HEK293T (cell line): ENCODE measurements at regions of chr20 and their contacts with region 1.

Region 1: DNA sequence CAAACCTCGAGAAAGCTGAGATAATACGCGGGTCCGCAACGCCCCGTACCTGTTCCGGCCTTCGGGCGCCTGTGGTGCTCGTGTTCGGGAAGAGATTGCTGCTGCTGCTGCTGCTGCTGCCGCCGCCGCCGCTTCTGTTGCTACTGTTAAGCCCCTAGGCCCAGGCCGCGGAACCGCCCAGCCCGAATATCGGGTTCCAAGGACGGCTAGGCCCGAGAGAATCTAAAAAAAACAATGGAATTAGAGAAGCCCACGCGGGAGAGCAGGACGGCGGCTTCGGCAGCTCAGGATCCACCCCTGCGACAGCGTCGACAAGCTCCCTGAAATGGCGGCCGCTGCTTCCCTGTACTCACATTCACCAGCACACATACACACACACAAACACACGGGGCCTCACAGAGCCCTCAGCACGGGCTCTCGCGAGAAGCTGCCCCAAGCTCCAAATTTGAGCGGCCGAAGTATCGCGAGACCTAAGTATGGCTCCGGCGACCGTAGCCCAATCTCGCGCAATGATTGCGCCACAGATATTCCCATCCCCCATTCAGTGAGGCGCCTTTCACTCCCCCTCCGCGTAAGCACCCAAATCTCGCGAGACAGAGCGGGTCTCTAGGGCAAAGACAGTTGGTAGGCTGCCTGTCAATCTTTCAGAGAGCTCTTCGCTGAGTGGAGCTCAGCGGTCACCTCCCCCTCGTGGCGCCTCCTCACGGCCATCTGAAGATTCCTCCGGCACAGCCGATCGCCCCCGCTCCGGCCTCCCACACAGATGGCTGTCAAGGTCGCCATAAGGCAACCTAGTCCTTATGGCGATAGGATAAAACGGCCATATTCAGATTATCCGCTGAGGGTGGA is at the start of gene RBM39:
- DNase-seq: peak; percentile 96

Region 2: DNA sequence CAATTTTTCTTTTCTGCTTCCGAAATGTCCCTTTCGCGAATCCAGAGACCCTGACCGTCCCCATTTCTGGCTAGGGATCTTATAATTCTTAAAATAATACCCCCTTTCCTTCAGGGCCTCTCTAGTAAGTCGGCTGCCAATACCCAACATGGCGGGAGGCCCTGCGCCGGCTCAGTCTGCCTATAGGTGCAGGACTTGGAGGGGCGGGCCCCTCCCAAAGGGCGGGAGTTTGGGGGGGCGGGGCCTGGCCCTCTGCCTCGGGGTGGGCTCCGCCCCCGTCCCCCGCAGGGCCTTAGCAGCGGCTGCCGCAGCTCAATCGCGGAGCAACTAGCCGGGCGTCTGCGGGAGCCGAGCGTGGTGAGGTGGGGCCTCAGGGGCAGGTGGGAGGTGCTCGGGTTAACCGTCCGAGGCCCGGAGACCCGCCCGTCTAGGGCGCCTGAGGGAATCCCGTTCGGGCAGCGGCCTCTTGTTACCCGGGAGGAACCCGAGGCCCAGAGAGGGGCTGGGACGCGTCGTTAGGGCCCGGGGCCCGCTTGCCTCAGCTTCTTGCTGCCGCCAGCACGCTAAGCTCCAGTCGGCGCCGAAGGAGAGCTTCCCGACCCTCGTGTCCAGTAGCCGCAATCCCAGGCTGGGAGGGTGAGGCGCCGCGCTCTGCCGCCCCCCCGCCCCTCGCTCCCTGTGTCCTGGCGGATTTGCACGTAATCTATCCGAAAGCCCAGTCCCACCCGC is 287.1 kb before region 1 on chr20 and contains the start of gene CEP250:
- CTCF ChIA-PET with region 1: no interaction called
- POLR2A ChIA-PET with region 1: interaction called, 11 read pairs
- DNase-seq: peak; percentile 96

Region 3: DNA sequence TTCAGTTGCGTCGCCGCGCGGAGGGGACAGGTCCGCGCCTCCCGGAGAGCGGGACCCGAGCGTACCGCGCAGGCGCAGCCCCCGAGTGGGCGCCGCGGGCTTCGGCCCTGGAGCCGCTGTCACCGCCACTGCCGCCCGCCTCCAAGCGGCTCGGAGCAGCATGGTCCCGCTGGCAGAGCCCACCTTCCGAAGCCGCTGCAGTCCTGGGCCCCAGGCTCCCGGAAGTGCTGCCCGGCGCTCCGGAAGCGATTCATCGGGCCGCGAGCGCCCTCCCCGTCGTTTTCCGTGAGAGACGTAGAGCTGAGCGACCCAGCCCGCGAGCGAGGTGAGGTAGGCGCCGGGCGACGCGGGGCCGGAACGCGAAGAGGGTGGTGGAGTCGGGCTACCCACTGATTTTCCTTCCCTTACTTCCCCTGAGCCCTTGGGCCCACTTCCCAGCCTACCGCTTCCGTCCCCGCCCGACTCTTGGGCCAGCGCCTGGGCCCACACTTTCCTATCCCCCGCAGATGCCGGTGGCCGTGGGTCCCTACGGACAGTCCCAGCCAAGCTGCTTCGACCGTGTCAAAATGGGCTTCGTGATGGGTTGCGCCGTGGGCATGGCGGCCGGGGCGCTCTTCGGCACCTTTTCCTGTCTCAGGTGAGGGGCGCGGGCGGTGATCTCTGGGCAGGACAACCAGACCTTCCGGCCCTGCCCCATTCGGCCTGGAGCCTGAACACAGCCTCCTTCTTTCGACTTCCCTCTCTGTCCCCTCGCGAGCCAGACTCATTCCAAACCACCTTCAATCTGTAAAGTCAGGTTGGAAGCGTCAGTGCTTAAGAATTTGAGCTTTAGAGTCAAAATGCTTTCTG is 42.8 kb before region 1 on chr20 and contains the starts of genes NFS1 and ROMO1:
- CTCF ChIA-PET with region 1: interaction called, 3 read pairs
- POLR2A ChIA-PET with region 1: interaction called, 11 read pairs
- DNase-seq: peak; percentile 91

Region 4: DNA sequence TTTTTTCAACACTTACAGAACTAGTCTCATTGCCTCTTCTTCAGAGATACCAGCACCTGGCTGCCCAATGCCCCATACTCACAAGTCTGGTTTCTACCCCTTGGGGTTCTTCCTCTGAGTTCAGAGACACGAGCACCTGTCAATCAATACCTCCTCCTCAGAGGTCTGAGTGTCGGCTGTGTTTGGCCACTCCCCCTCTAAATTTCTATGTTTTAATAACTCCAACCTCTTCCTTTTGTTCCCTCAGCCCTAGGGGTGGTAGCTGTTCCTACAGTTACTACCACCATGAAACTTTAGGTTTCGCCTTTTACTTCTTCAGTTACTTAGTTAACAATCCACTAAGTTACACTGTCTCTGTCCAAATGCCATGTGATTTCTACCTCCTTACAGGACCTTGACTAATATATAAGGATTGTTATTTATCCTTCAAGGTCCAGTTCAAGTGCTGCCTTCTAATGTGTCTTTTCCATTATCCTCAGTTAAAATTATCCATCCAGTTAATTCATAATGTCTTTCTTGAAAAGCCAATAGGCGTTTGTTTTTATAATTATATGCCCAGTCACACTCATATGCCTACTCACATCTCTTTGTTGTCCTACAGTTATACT is 15.1 kb after region 1 on chr20:
- CTCF ChIA-PET with region 1: no interaction called
- POLR2A ChIA-PET with region 1: interaction called, 32 read pairs
- DNase-seq: no peak

Region 5: GRCh38 chr20:35849706-35850105 is 107.6 kb after region 1 on chr20:
- CTCF ChIA-PET with region 1: no interaction called
- POLR2A ChIA-PET with region 1: interaction called, 17 read pairs
- DNase-seq: no peak

Region 6: GRCh38 chr20:35878113-35878625 is 136.1 kb after region 1 on chr20:
- CTCF ChIA-PET with region 1: no interaction called
- POLR2A ChIA-PET with region 1: interaction called, 33 read pairs
- DNase-seq: no peak

Region 7: GRCh38 chr20:35954200-35954906 is 212.2 kb after region 1 on chr20 and contains the start of gene SCAND1:
- CTCF ChIA-PET with region 1: no interaction called
- POLR2A ChIA-PET with region 1: interaction called, 15 read pairs
- DNase-seq: peak; percentile 95